A549 (cell line): ENCODE measurements at regions of chr2 and their contacts with region 1.

Region 1: DNA sequence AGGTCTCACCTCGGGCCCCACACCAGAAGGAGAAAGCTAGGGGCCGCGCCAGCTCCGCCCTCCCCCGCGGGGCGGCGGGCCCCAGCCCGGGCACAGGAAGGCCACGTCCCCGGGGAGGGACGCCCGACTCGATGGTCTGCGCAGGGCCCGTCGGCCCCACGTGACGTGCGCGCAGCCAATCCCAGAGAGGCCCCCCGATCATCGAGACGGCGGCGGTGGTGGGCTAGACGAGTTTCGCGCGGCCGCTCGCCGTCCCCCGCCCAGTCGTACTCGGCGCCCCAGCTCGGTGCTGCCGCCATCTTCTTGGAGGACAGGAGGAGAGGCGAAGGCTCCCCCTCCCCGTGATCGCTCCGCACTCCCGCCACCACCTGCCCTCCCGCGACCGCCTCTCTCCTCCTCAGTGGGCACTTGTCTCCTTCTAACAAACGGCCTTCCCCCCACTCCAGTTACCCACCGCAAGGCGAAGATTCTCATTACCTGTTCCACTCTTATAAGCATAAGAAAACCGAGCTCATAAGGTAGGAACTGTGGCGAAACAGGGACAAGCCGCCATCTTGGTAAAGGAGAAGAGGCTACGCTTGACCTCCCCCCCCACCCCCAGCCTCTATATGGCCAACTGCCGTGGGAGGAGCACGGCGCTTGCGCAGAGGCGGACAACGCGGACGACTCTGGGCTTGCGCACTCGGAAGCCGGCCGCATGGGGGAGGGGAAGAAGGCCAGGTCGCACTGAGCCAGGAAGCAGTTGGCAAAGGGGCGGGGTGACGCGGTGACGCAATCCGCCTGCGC is at the start of gene HDLBP:
- DNase-seq: peak; percentile 94 to 99
- ATAC-seq: peak; percentile 86 to 93
- H3K4me3 ChIP-seq: peak within 1 kb of the TSS; percentile 76
- H3K27ac ChIP-seq: peak within 1 kb of the TSS; percentile 99 to 100
- H3K4me1 ChIP-seq: peaks cover 63% of the 10 kb centered on the region
- CTCF ChIP-seq: peak; percentile 59
- EP300 ChIP-seq: no peak
- POLR2A ChIP-seq: peak; percentile 15
- RAD21 ChIP-seq: 0 out of 5 replicates have a peak, but pooled peaks of 1 of the 2 experiments have one; percentile 9
- polyA plus RNA-seq, gene HDLBP: 292 and 330 TPM in 2 replicates

Region 2: GRCh38 chr2:241291153-241291552 is 24.1 kb before region 1 on chr2:
- CTCF ChIA-PET with region 1: interaction called, 12 read pairs
- POLR2A ChIA-PET with region 1: interaction called, 7 read pairs
- DNase-seq: no peak
- ATAC-seq: no peak
- H3K4me3 ChIP-seq: no peak overlapping the region
- H3K27ac ChIP-seq: no peak overlapping the region
- H3K4me1 ChIP-seq: peaks cover 10% of the 10 kb centered on the region; the same call in 1 of the 3 replicates
- CTCF ChIP-seq: no peak
- EP300 ChIP-seq: no peak
- POLR2A ChIP-seq: no peak
- RAD21 ChIP-seq: no peak

Region 3: GRCh38 chr2:241302759-241303651 is 12.3 kb before region 1 on chr2:
- CTCF ChIA-PET with region 1: interaction called, 14 read pairs
- POLR2A ChIA-PET with region 1: interaction called, 7 read pairs
- DNase-seq: no peak
- ATAC-seq: peak; percentile 19 to 38; a peak in 4 of 6 replicates
- H3K4me3 ChIP-seq: no peak overlapping the region
- H3K27ac ChIP-seq: no peak overlapping the region
- H3K4me1 ChIP-seq: no peaks in the 10 kb centered on the region
- CTCF ChIP-seq: no peak
- EP300 ChIP-seq: no peak
- POLR2A ChIP-seq: no peak
- RAD21 ChIP-seq: no peak

Region 4: GRCh38 chr2:241432824-241433448 is 117.7 kb after region 1 on chr2:
- CTCF ChIA-PET with region 1: no interaction called
- POLR2A ChIA-PET with region 1: no interaction called
- DNase-seq: no peak
- ATAC-seq: no peak
- H3K4me3 ChIP-seq: no peak overlapping the region
- H3K27ac ChIP-seq: no peak overlapping the region
- H3K4me1 ChIP-seq: no peaks in the 10 kb centered on the region
- CTCF ChIP-seq: no peak
- EP300 ChIP-seq: no peak
- POLR2A ChIP-seq: no peak
- RAD21 ChIP-seq: no peak

Region 5: GRCh38 chr2:241598480-241598879 is 283.2 kb after region 1 on chr2:
- CTCF ChIA-PET with region 1: no interaction called
- POLR2A ChIA-PET with region 1: no interaction called
- DNase-seq: peak in 1 of 2 experiments; percentile 35
- ATAC-seq: peak; percentile 52 to 71; a peak in 3 of 6 replicates
- H3K4me3 ChIP-seq: no peak overlapping the region
- H3K27ac ChIP-seq: no peak overlapping the region
- H3K4me1 ChIP-seq: no peaks in the 10 kb centered on the region
- CTCF ChIP-seq: peak; percentile 23; the same call in 1 of the 3 replicates
- EP300 ChIP-seq: no peak
- POLR2A ChIP-seq: no peak
- RAD21 ChIP-seq: peak; percentile 33 to 34; a peak in 3 of 5 replicates